ENCODE measurements at regions of chr18 and their contacts with region 1.

Region 1: DNA sequence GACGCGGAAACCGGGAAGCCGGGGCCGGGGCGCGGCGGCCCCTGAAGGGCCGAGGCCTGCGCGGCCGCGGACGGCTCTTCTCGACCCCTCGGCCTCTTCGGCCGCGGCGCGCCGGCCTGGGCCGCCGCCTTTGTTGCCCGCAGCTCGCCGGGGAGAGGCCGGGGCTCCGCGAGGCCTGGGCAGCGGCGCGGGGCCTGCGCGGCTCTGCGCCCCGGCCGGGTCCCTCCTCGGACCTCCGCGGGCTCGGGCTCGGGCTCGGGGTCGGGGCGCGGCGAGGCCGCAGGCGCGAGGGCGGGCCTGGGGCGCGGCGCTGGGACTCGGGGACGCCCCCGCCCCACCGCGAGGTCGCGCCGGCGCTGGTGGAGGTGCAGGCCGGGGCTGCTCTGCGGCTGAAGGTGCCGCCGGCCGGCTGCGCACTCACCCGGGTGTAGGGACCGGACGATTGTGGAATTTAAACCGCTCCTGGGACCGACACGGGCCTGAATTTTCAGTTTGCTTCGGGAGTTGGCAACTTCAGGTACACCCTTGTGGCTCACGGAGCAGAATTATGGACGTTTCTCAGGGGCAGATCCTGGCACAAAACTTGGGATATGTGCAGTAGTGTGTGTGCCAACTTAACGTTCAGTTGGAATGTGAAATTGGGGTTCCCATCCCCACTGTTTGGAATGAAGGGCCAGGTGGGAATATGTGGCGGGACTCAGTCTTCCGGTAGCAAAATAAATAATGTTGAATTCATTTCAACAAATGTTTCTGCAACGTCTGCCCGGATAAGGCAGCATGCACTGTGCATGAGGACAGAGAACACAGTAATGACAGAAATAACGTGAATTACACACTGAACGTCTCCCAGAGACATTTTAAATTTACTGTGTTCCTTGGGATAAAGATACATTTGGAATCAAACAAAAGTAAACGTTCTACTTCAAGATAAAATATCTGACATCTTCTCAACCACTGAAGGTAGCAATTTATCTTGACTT is 796 bp downstream of the SOCS6 start:
- DNase-seq: no peak
- H3K4me3 ChIP-seq: peak overlapping the region; percentile 68 to 89 (median 84)
- H3K27ac ChIP-seq: peak overlapping the region; percentile 81 to 96 (median 94)
- H3K4me1 ChIP-seq: peaks cover 0 to 54% (median 26%) of the 10 kb centered on the region in 3 donors
- H3K27me3 ChIP-seq: no peaks in the 10 kb centered on the region
- CTCF ChIP-seq: no peak
- POLR2A ChIP-seq: no peak

Region 2: GRCh38 chr18:69948919-69949537 is 340.6 kb before region 1 on chr18:
- intact Hi-C with region 1: no loop called
- DNase-seq: no peak
- H3K4me3 ChIP-seq: no peak overlapping the region
- H3K27ac ChIP-seq: no peak overlapping the region
- H3K4me1 ChIP-seq: no peaks in the 10 kb centered on the region
- H3K27me3 ChIP-seq: no peaks in the 10 kb centered on the region
- CTCF ChIP-seq: no peak
- POLR2A ChIP-seq: no peak

Region 3: DNA sequence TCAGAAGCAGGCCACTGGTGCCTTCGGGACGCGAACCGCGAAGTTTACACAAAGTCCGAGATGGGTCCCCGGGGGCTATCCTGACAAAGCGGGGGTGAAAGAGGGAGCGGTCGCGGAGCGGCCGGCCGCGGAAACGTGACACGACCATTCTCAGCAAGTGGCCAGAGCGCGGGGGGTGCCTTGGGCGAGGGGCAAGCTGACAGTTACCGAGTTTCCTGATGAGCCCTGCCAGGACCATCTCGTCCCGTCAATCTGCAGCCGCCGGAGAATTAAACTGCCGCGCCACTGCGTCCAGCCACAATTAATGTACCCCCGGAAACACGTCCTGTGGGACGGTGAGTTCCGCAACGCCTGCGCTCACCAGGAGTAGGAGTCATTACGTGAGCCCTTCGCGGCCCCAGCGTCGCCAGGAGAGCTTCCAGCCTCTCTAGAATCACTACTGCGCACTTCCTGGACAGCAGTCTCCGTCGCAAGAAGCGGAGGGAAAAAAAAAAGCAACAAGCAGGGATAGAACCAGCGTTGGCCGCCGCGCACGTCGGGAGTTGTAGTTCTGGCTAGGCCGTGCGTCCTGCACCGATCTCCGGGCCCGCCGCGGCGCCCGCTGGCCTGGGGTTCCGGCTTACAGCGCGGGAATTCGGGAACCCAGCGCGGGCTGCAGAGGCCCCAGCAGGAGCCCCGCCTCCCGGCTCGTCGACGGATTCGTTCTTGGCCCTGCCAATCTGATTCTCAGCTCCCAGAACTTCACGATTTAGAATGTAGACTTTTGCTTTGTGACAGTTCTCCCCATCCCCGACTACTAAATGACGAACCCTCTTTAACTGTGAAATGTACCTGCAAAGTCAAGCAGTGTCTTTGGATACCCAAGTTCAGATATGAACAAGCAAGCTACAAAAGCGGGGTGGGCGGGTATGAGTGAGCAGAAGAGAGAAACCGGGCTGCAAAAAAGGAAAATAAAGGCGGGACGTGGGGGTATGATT is 83.9 kb before region 1 on chr18 and contains the start of gene RTTN:
- intact Hi-C with region 1: loop called (anchors 10 kb)
- DNase-seq: peak; percentile 59
- H3K4me3 ChIP-seq: peak within 1 kb of the TSS; percentile 70 to 90 (median 76)
- H3K27ac ChIP-seq: peak within 1 kb of the TSS; percentile 93 to 97 (median 94)
- H3K4me1 ChIP-seq: peaks cover 3 to 22% (median 8%) of the 10 kb centered on the region in 3 donors
- H3K27me3 ChIP-seq: no peaks in the 10 kb centered on the region
- CTCF ChIP-seq: peak in 1 of 6 experiments; percentile 31
- POLR2A ChIP-seq: no peak
- total RNA-seq, gene RTTN: 4.1 to 14.4 (median 9.2) TPM